Activated CD4-positive, alpha-beta T cell treated with anti-CD3 and anti-CD28 coated beads for 36 hours (primary cell): ENCODE measurements at regions of chr3 and their contacts with region 1.

Region 1: DNA sequence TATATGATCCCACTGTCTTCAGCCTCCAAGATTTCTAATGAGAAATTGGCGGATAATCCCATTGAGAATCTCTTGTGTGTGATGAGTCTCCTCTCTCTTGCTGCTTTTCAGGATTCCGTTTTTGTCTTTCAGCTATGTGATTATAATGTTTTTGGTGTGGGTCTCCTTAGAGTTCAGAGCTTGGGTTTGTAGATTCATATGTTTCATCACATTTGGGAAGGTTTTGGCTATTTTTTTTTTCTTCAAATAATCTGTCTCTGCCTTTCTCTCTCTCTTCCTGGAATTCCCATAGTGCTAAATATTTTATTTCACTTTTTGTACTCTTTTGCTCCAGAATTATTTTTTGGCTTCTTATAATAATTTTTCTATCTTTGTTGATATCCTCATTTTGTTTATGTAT is 40.4 kb downstream of the SACM1L start:
- DNase-seq: no peak
- ATAC-seq: no peak
- H3K4me3 Mint-ChIP-seq: no peak overlapping the region
- H3K27ac Mint-ChIP-seq: no peak overlapping the region
- H3K4me1 Mint-ChIP-seq: peaks cover 14% of the 10 kb centered on the region
- H3K27me3 Mint-ChIP-seq: no peaks in the 10 kb centered on the region

Region 2: DNA sequence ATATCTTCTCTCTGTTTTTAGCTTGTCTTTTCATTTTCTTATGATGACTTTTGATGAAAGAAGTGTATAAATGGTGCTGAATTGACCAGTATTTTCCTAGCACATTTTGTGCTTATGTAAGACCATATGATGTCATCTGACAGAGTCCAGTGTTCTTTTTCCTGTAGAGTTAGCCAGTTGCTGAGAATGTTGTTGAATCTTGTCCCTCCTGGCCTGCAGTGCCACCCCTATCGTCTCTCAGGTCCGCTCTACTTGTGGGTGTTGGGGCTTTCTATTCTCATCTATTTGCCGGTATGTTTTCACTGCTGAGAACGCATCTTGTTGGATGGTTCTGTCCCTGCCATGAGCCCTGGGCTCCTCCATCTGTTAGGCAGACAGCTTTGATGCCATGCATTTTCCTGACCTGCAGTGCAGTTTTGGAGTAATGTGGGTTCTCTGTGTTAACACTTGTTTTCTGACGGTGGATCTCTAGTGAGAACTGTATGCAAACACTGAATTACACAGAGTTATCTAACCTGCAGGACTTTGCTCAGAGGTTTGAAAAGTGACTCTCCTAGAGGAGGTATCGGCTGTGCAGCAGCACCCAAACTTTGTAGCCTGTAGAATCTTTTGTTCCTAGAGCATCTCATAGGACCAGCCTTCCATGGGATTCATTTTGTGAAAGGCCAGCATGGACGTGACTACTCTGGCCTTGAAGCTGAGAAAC is 22.1 kb after region 1 on chr3:
- CTCF ChIA-PET with region 1: interaction called, 4 read pairs
- POLR2A ChIA-PET with region 1: no interaction called
- intact Hi-C with region 1: loop called in 1 of 2 experiments (anchors 1 kb)
- DNase-seq: no peak
- ATAC-seq: no peak
- H3K4me3 Mint-ChIP-seq: no peak overlapping the region
- H3K27ac Mint-ChIP-seq: no peak overlapping the region
- H3K4me1 Mint-ChIP-seq: no peaks in the 10 kb centered on the region
- H3K27me3 Mint-ChIP-seq: no peaks in the 10 kb centered on the region